ENCODE measurements at regions of chr2 and their contacts with region 1.

Region 1: GRCh38 chr2:37414470-37414949 is 70.1 kb downstream of the QPCT start:
- DNase-seq: peak in 1 of 7 donors; percentile 9
- H3K4me3 ChIP-seq: no peak overlapping the region
- H3K27ac ChIP-seq: no peak overlapping the region
- H3K4me1 ChIP-seq: peaks cover 0 to 6% of the 10 kb centered on the region in 2 donors
- H3K27me3 ChIP-seq: no peaks in the 10 kb centered on the region
- CTCF ChIP-seq: peak; percentile 77 to 98 (median 93)
- POLR2A ChIP-seq: no peak

Region 2: DNA sequence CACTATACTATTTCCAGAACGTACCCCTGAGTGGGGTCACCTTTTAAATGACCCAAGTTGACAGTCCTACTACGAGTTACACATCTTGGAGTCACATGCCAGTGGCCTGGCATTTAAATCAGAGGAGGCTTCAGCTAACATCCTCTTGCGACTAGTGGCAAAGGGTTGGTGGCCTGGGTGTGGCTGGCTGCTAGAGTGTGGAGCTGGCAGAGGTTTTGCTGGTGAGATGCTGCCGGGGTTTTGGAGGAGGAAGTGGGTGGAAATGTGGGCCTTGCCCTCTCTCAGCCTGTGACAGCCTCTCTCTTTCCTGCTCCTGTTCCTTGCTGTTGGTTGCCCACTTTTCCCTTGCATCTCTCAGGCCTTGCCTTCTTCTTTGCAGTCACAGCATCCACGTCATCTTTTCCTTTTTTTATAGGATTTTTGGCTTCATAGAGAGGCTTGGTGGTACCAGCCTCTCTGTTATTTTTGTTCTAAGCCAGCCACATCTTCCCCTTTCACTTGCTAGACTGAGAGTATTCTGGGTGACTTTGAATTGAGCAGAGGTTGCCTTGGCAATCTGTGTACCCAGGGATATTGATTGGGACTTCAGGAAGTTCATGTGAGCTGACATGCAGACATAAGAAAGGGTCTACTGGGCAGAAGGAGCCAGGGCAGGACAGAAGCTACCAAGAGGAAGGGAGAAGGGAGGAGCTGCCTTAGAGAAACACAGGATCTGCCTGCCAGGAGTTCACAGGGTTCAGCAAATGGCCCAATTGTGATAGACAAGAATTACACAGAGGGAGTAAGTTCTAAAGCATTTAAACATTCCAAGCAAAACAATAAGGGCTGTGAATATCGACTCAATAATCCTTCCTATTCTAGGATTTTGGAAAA is 201.5 kb after region 1 on chr2:
- intact Hi-C with region 1: no loop called
- DNase-seq: peak in 2 of 7 donors; percentile 18 to 53
- H3K4me3 ChIP-seq: no peak overlapping the region
- H3K27ac ChIP-seq: peak overlapping the region in 2 of 5 donors; percentile 12 to 16
- H3K4me1 ChIP-seq: peaks cover 0 to 10% of the 10 kb centered on the region in 2 donors
- H3K27me3 ChIP-seq: no peaks in the 10 kb centered on the region
- CTCF ChIP-seq: no peak
- POLR2A ChIP-seq: no peak

Region 3: DNA sequence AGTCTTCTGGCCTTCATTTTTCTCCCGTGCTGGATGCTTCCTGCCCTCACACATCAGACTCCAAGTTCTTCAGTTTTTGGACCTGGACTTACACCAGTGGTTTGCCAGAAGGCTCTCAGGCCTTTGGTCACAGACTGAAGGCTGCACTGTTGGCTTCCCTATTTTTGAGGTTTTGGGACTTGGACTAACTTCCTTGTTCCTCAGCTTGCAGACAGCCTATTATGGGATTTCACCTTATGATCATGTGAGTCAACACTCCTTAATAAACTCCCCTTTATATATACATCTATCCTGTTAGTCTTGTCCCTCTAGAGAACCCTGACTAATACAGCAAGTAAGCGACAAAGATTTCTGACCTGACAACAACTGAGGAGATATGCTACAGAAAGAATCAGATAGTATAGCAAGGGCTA is 249.7 kb after region 1 on chr2:
- intact Hi-C with region 1: loop called in 1 of 2 experiments (anchors 10 kb)
- DNase-seq: peak in 1 of 7 donors; percentile 23
- H3K4me3 ChIP-seq: no peak overlapping the region
- H3K27ac ChIP-seq: peak overlapping the region in 1 of 5 donors; percentile 27
- H3K4me1 ChIP-seq: peaks cover 0 to 30% of the 10 kb centered on the region in 2 donors
- H3K27me3 ChIP-seq: no peaks in the 10 kb centered on the region
- CTCF ChIP-seq: no peak
- POLR2A ChIP-seq: no peak

Region 4: GRCh38 chr2:37832590-37833197 is 418.2 kb after region 1 on chr2:
- intact Hi-C with region 1: loop called (anchors 5 kb)
- DNase-seq: peak; percentile 83 to 96 (median 91)
- H3K4me3 ChIP-seq: no peak overlapping the region
- H3K27ac ChIP-seq: no peak overlapping the region
- H3K4me1 ChIP-seq: peaks cover 3 to 8% of the 10 kb centered on the region in 2 donors
- H3K27me3 ChIP-seq: no peaks in the 10 kb centered on the region
- CTCF ChIP-seq: peak; percentile 60 to 91 (median 85)
- POLR2A ChIP-seq: no peak

Region 5: DNA sequence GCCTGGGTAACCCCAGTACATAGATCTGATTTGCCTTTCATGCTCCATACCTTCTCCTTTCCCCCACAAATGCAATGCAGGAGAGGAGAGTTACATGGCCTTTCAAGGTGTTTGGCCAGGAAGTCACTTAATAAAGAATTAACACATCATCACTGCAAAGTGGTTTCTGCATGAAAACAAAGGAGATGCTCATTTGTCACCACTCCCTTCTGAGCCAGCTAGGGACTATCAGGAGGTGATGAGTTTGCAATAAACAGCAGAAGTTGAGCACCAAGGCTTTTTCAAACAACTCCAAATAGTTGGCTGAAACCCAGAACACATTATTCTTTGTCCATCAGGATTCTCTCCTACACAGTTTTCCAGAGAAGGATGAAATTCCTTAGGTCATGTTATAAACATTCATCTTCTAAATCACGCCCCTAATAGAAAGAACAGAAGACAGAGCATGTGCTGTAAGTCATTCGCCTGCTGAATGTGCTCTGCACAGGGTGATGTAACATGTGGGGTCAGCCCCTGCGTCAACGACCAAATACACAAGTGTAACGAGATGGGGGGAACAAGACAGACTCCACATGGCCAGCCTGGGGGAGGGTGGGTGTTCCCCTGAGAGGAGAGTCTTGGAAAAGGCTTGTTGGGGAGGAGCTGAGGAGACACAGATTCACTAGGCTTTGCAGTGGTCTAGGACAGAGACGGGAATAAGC is 423.3 kb after region 1 on chr2:
- intact Hi-C with region 1: loop called (anchors 5 kb)
- DNase-seq: peak in 3 of 7 donors; percentile 15 to 55 (median 47)
- H3K4me3 ChIP-seq: no peak overlapping the region
- H3K27ac ChIP-seq: no peak overlapping the region
- H3K4me1 ChIP-seq: no peaks in the 10 kb centered on the region
- H3K27me3 ChIP-seq: no peaks in the 10 kb centered on the region
- CTCF ChIP-seq: no peak
- POLR2A ChIP-seq: no peak